ENCODE measurements at regions of chr10 and their contacts with region 1.

Region 1: DNA sequence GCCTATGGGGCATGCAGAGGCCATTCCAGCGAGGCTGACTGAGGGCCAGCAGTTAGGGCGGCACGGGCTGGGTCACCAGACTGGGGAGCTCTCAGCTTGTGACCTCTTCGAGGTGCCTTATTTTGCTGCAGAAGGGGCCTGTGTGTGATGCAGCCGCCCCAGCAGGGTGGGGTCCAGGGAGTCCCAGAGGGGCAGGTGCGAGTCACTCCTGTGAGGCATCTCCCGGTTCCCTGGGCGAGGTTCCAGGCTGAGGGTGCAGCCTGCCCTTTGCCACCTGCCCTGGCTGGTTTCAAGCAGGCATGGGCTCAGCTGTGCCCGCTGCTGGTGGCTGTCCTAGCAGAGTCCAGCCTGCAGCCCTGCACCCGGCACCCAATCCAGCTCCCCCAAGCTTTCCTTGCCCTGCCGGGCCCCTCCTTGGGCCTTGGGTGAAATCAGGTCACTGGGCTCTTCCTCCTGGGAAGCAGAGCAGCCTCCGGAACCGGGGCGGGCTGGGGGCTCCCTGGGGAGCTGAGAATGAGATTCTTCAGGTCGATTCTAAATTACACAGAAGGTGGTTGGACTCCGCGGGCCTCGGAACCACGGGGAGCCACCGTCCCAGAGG is 64.7 kb downstream of the PWWP2B start:
- DNase-seq: no peak
- ATAC-seq: no peak

Region 2: GRCh38 chr10:132634241-132634946 is 172.7 kb after region 1 on chr10:
- intact Hi-C with region 1: loop called (anchors 1 kb)
- DNase-seq: peak; percentile 47
- ATAC-seq: no peak

Region 3: DNA sequence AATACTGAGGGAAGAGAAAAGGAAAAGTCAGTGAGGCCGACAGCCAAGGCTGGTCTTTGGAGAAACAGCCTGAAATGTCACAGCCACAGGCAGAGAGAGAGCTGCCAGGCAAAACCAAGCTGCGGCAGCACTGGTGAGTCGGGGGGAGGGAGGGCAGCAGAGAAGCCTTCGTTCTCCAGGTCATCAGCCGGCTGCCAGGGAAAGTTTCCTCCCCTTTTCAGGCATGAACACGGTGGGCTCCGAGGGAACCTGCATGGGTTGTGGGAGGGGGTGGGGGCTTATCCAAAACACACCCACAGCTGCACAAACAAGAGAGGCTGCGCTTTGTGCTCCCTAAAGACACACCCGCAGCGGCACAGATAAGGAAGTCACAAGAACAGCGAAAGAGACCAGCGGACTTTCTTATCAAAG is 386.6 kb after region 1 on chr10:
- intact Hi-C with region 1: no loop called
- DNase-seq: peak; percentile 37
- ATAC-seq: peak; percentile 17

Measured in sciatic nerve (tissue), 2 donors.